Posterior vena cava (tissue), 2 donors: ENCODE measurements at regions of chr7 and their contacts with region 1.

Region 1: DNA sequence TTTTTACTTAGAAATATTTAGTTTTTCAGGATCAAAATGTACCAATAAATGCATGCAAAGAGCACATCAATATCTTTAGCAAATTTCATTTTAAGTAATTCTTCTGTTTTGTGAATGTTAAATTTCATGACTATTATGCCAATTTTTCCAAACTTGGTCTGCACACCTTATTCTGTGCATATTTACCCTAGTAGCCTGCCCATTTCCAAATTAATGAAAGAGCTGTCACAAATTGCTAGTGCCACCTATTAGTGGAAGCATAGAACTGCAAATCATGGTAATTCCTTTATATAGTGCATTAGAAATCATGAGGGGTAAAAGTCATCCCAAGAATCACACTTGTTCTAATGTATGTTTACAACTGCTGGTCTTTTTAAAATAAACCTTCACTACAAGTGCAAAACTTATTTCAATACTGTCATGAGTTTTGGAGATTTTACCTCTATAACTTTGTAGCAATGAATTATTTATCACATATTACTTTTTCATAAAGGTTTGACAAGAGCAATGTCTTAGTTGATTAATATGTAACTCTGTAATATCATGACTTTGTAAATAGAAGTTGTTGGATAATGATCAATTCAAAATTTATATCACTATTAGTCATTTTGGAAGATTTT is 5.7 kb downstream of the SEMA3A start:
- DNase-seq: no peak

Region 2: DNA sequence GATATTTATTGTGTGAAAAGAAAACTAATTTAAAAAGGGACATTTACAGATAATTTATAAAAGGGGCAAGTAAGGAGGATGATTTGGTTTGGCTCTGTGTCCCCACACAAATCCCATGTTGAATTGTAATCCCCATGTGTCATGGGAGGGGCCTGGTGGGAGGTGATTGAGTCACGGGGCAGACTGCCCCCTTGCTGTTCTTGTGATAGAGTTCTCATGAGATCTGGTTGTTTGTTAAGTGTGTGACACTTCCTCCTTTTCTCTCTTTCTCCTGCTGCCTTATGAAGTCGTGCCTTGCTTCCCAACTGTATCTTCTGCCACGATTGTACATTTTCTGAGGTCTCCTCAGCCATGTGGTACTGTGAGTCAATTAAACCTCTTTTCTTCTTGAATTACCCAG is 369.0 kb before region 1 on chr7:
- intact Hi-C with region 1: no loop called
- DNase-seq: no peak

Region 3: DNA sequence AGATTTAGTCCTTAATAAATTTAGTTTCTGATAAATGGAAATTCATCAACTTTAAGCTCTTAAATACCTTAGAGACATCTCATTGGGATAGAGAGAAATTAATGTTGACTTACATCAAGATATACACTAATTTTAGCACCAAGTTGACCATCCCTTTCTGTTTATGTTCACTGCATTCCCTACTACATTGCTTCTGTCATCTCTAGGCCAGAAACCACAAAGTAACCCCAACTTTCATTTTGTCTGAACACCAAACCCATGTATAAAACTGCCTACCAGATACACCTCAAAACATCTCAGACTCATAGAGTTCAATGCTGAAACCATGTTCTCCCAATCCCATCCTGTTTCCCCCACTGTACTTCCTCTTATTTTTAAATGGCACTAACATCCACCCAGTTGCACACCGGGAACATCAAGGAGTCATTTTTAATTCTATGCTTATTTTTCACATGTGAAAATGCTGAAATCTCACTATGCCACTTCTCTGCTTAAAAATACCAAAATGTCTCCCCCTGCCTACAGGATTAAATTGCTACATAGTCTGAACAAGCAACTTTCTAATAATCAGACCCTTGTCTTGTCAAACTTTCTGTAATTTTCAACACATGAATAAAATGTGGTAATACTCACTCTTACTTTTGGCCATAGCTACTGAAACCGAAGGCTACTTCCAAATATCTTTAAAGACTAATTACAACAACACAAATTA is 796.3 kb after region 1 on chr7:
- intact Hi-C with region 1: loop called in 1 of 2 experiments (anchors 5 kb)
- DNase-seq: no peak